ENCODE measurements at regions of chr10 and their contacts with region 1.

Region 1: GRCh38 chr10:30192846-30193608 is 133.6 kb upstream of the JCAD start:
- DNase-seq: no peak

Region 2: GRCh38 chr10:30127120-30127541 is 65.9 kb before region 1 on chr10:
- intact Hi-C with region 1: no loop called
- DNase-seq: no peak

Region 3: DNA sequence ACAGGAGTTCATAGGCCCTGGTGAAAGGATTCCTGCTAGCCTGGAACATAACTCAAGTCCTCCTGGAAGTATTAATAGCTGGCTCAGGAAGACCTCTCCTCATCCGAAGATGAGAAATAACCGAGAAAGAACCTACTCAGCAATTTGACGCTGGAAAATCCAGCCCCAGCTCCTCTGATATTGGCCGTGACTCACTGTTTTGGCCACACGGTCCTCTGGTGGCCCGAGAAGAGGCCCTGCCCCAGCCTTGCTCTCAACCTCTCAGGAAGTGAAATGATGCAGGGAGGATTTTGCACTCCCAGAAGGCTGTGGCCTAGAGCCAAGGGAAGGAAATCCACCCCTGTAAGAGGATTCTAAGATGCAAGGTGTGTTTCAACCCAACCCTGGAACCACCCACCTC is 34.5 kb after region 1 on chr10:
- intact Hi-C with region 1: loop called (anchors 5 kb)
- DNase-seq: no peak

Measured in cardiac septum (tissue), 1 donor.